ENCODE measurements at regions of chr10 and their contacts with region 1.

Region 1: GRCh38 chr10:60032723-60033122 is 126.4 kb upstream of the CCDC6 start:
- DNase-seq: peak; percentile 24 to 58
- ATAC-seq: peak; percentile 89 to 94 (median 90)
- H3K4me3 ChIP-seq: no peak overlapping the region
- H3K27ac ChIP-seq: peak overlapping the region; percentile 88
- H3K4me1 ChIP-seq: peaks cover 25% of the 10 kb centered on the region
- H3K27me3 ChIP-seq: no peaks in the 10 kb centered on the region
- CTCF ChIP-seq: peak; percentile 63

Region 2: DNA sequence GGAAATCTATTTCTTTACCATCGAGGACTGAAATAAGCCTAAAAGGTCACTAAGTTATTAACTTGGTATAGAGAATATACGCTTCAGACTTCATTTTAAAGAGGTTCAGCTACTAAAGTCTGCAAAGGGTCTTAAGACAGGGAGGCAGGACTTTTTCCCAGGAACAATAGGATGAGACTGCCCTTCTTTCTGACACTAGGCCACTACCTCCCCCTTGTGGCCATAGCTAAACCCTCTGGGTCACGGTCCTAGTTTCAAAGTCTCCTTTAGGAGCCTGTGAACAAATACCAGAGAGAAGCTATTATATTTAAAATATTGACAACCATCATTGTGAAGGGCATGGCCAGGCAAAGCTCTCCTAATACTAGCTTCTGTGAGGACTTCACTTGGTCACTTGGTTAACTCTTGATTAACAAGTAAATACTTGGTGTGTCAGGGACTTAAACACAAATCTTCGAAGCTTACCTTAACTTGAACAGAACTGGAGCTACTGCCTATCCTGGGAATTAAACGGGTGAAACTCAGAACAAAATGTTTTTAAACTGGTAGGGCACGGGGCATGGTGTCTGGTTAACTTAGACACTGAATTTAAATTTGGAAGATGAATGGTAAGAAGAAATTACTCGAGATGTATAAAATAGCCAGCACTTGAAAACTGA is 202.0 kb before region 1 on chr10:
- intact Hi-C with region 1: loop called in 1 of 2 experiments (anchors 10 kb)
- DNase-seq: peak in 1 of 2 donors; percentile 29
- ATAC-seq: peak; percentile 39 to 76 (median 62)
- H3K4me3 ChIP-seq: no peak overlapping the region
- H3K27ac ChIP-seq: no peak overlapping the region
- H3K4me1 ChIP-seq: peaks cover 38% of the 10 kb centered on the region
- H3K27me3 ChIP-seq: no peaks in the 10 kb centered on the region
- CTCF ChIP-seq: peak; percentile 80

Region 3: GRCh38 chr10:59865101-59865500 is 167.6 kb before region 1 on chr10:
- intact Hi-C with region 1: loop called in 1 of 2 experiments (anchors 5 kb)
- DNase-seq: no peak
- ATAC-seq: peak; percentile 78 to 85 (median 83)
- H3K4me3 ChIP-seq: no peak overlapping the region
- H3K27ac ChIP-seq: peak overlapping the region; percentile 13
- H3K4me1 ChIP-seq: peaks cover 27% of the 10 kb centered on the region
- H3K27me3 ChIP-seq: no peaks in the 10 kb centered on the region
- CTCF ChIP-seq: peak; percentile 55

Region 4: DNA sequence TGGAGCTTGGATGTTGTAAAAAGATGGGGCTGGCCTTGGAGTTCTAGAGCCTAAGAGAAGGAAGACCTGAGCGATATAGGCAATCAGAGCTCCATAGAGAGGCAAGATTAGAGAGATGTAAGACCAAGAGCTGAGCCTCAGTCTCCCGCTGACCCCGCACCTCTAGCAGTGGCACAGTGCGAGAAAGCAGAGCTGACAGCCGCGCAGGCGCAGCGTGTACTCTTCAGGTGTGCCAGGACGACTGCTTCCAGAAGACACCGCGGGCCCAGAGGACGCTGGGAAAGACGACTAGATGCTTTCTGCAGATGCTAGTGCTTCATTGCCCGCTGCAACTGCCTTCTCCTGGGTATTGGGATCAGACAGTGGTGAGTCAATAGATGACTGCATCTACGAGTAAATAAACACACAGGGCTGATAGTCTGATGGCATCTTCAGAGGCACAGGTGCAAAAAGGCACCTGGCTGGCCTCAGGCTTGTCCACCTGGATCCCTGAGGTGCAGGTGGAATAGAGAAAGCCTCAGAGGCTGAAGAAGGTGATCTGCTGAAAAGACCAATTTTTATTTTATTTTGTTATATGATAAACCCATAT is 88.3 kb before region 1 on chr10:
- intact Hi-C with region 1: no loop called
- DNase-seq: no peak
- ATAC-seq: no peak
- H3K4me3 ChIP-seq: no peak overlapping the region
- H3K27ac ChIP-seq: no peak overlapping the region
- H3K4me1 ChIP-seq: no peaks in the 10 kb centered on the region
- H3K27me3 ChIP-seq: peaks cover 0 to 1% (median 0%) of the 10 kb centered on the region in 3 donors
- CTCF ChIP-seq: no peak

Region 5: GRCh38 chr10:60944159-60944909 is 911.6 kb after region 1 on chr10 and contains the start of gene RHOBTB1:
- intact Hi-C with region 1: no loop called
- DNase-seq: peak; percentile 83 to 91
- ATAC-seq: peak; percentile 85 to 92 (median 88)
- H3K4me3 ChIP-seq: peak within 1 kb of the TSS; percentile 90
- H3K27ac ChIP-seq: peak within 1 kb of the TSS; percentile 99
- H3K4me1 ChIP-seq: peaks cover 29% of the 10 kb centered on the region
- H3K27me3 ChIP-seq: no peaks in the 10 kb centered on the region
- CTCF ChIP-seq: no peak
- total RNA-seq, gene RHOBTB1: 20.8 to 47.4 (median 30.7) TPM